HCT116 (cell line): ENCODE measurements at regions of chr3 and their contacts with region 1.

Region 1: GRCh38 chr3:153595186-153595815 is 433.3 kb downstream of the RAP2B start:
- DNase-seq: peak; percentile 24
- ATAC-seq: peak; percentile 88
- H3K4me3 ChIP-seq: no peak overlapping the region
- H3K27ac ChIP-seq: no peak overlapping the region
- H3K4me1 ChIP-seq: peaks cover 0 to 9% of the 10 kb centered on the region in 2 experiments; a peak in 2 of 4 replicates
- H3K27me3 ChIP-seq: no peaks in the 10 kb centered on the region
- CTCF ChIP-seq: peak; percentile 79 to 85 (median 85)
- POLR2A ChIP-seq: no peak
- RAD21 ChIP-seq: peak; percentile 86

Region 2: DNA sequence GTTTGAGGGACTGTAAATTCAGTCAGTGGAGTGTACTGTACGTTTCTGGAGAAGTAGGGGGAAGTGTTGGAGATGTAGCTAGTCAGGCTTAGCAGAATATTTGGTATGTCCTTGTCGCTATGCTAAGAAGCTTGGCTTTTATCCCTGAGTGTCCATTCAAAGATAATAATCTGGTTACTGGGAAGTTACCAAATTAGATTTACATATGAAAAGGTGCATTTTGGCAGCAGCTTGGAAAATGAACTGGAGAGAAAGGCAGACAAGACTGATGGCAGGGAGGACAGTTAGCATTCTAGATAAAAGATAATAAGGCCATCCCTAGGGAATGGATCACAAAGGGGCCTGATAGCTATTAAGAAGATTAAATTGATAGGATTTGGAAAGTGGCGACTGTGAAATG is 701.7 kb before region 1 on chr3:
- CTCF ChIA-PET with region 1: no interaction called
- POLR2A ChIA-PET with region 1: no interaction called
- RAD21 ChIA-PET with region 1: no interaction called
- intact Hi-C with region 1: no loop called
- DNase-seq: no peak
- ATAC-seq: no peak
- H3K4me3 ChIP-seq: no peak overlapping the region
- H3K27ac ChIP-seq: no peak overlapping the region
- H3K4me1 ChIP-seq: no peaks in the 10 kb centered on the region
- H3K27me3 ChIP-seq: no peaks in the 10 kb centered on the region
- CTCF ChIP-seq: no peak
- POLR2A ChIP-seq: no peak
- RAD21 ChIP-seq: no peak

Region 3: GRCh38 chr3:153173758-153174516 is 421.4 kb before region 1 on chr3:
- CTCF ChIA-PET with region 1: no interaction called
- POLR2A ChIA-PET with region 1: no interaction called
- RAD21 ChIA-PET with region 1: no interaction called
- intact Hi-C with region 1: loop called (anchors 10 kb)
- DNase-seq: peak; percentile 52
- ATAC-seq: peak; percentile 97
- H3K4me3 ChIP-seq: no peak overlapping the region
- H3K27ac ChIP-seq: no peak overlapping the region
- H3K4me1 ChIP-seq: peaks cover 4 to 16% of the 10 kb centered on the region in 2 experiments
- H3K27me3 ChIP-seq: no peaks in the 10 kb centered on the region
- CTCF ChIP-seq: peak; percentile 36 to 98 (median 46)
- POLR2A ChIP-seq: no peak
- RAD21 ChIP-seq: peak; percentile 78

Region 4: GRCh38 chr3:153552887-153553598 is 42.3 kb before region 1 on chr3:
- CTCF ChIA-PET with region 1: no interaction called
- POLR2A ChIA-PET with region 1: no interaction called
- RAD21 ChIA-PET with region 1: no interaction called
- intact Hi-C with region 1: no loop called
- DNase-seq: no peak
- ATAC-seq: no peak
- H3K4me3 ChIP-seq: no peak overlapping the region
- H3K27ac ChIP-seq: no peak overlapping the region
- H3K4me1 ChIP-seq: no peaks in the 10 kb centered on the region
- H3K27me3 ChIP-seq: no peaks in the 10 kb centered on the region
- CTCF ChIP-seq: no peak
- POLR2A ChIP-seq: no peak
- RAD21 ChIP-seq: no peak

Region 5: DNA sequence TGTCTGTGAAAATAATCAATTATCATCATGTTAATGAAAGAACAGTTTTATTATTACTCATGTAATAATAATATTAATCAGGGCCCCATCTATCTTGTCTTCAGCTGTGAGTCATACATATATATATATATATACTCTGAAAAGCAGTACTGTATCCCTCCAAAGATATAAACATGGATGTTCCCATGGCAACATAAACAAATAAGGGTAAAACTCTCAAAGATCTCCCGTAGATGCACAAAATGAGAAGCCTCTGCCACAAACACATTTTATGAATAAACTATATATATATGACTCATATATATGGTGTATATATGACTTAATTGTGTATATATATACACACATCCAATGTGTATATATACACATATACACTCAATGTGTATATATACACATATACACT is 362.1 kb after region 1 on chr3:
- CTCF ChIA-PET with region 1: no interaction called
- POLR2A ChIA-PET with region 1: no interaction called
- RAD21 ChIA-PET with region 1: no interaction called
- intact Hi-C with region 1: no loop called
- DNase-seq: no peak
- ATAC-seq: no peak
- H3K4me3 ChIP-seq: no peak overlapping the region
- H3K27ac ChIP-seq: no peak overlapping the region
- H3K4me1 ChIP-seq: no peaks in the 10 kb centered on the region
- H3K27me3 ChIP-seq: no peaks in the 10 kb centered on the region
- CTCF ChIP-seq: no peak
- POLR2A ChIP-seq: no peak
- RAD21 ChIP-seq: no peak